K562 (cell line): ENCODE measurements at regions of chr1 and their contacts with region 1.

Region 1: DNA sequence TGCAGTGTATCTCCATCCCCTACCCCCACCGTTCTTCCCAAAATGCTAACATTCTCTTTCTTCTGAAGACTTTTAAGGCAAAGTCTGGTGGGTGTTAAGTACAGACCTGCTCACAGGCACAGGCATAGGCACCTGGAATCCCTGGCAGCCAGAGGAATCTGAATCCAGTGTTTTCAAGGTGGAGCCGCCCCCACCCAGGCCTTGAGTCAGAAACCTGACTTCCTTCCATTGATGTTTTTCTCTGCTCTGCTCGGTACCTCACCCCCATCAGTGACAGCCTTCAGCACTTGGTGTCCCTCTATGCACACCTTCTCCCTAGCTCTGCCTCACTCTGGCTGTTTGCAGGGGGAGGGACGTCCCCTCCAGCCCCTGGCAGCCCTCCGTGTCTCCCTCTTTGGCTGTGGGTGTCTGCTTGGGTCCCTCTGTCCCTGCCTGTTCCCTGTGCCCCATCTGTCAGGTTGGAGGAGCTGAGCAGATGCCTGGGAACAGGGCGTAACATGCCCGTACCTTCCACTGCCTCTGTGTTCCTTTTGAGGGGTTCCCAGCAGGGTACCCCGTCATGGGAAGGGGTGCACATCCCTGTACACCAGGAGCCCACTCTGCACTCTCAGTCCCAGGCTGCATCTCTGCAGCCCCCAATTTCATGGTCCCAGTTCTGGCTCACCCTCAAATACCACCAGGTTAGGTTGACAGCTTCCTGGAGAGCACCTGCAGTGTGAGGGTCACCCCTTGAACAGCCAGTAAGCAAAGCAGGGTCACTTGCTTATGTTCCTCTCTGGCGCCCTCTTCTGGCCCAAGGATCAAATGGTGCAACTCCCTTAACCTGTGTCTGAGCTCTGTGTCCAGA is 6.7 kb downstream of the NCDN start:
- DNase-seq: peak; percentile 85 to 92 (median 86)
- ATAC-seq: peak; percentile 88
- H3K4me3 ChIP-seq: no peak overlapping the region
- H3K27ac ChIP-seq: no peak overlapping the region
- H3K4me1 ChIP-seq: peaks cover 0 to 25% of the 10 kb centered on the region in 2 experiments; a peak in 2 of 5 replicates
- H3K27me3 ChIP-seq: no peaks in the 10 kb centered on the region
- CTCF ChIP-seq: peak; percentile 91 to 94 (median 93)
- EP300 ChIP-seq: no peak
- POLR2A ChIP-seq: no peak
- RAD21 ChIP-seq: peak; percentile 59 to 85

Region 2: DNA sequence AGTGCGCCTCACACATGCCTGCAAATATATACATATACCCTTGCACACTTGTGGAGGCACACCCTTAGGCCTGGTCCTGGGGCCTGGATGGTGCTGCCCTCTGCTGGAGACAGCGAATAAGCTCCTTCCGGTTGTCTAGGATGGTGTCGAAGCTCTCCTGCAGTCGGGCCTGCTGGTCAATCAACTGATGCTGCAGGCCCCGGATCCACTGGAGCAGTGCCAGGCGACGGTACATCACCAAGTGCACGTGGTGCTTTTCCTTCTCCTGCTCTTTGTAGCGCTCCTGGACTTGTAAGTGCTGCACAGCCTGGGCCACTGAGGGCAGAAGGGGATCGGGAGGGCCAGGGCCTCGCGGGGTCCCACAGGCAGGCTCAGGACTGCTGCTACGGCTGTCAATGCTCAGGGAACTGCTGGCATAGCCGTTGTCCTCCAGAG is 151.3 kb after region 1 on chr1:
- CTCF ChIA-PET with region 1: interaction called, 11 read pairs
- POLR2A ChIA-PET with region 1: interaction called, 16 read pairs
- in situ Hi-C with region 1: loop called (anchors 5 kb)
- intact Hi-C with region 1: loop called (anchors 1 kb)
- DNase-seq: peak; percentile 74 to 90 (median 82)
- ATAC-seq: peak; percentile 77
- H3K4me3 ChIP-seq: no peak overlapping the region
- H3K27ac ChIP-seq: no peak overlapping the region
- H3K4me1 ChIP-seq: peaks cover 19 to 23% of the 10 kb centered on the region in 2 experiments; a peak in 4 of 5 replicates
- H3K27me3 ChIP-seq: no peaks in the 10 kb centered on the region
- CTCF ChIP-seq: peak; percentile 92 to 98 (median 94)
- EP300 ChIP-seq: no peak
- POLR2A ChIP-seq: no peak
- RAD21 ChIP-seq: peak; percentile 79 to 90

Region 3: GRCh38 chr1:35726450-35727433 is 162.5 kb after region 1 on chr1:
- CTCF ChIA-PET with region 1: interaction called, 47 read pairs
- POLR2A ChIA-PET with region 1: interaction called, 6 read pairs
- in situ Hi-C with region 1: loop called (anchors 5 kb)
- intact Hi-C with region 1: loop called (anchors 1 kb)
- DNase-seq: peak; percentile 70 to 77 (median 74)
- ATAC-seq: peak; percentile 97
- H3K4me3 ChIP-seq: no peak overlapping the region
- H3K27ac ChIP-seq: no peak overlapping the region
- H3K4me1 ChIP-seq: no peaks in the 10 kb centered on the region
- H3K27me3 ChIP-seq: no peaks in the 10 kb centered on the region
- CTCF ChIP-seq: peak; percentile 86 to 95 (median 94)
- EP300 ChIP-seq: no peak
- POLR2A ChIP-seq: no peak
- RAD21 ChIP-seq: peak; percentile 83 to 91

Region 4: GRCh38 chr1:35769759-35770446 is 205.6 kb after region 1 on chr1 and contains the start of gene CLSPN:
- CTCF ChIA-PET with region 1: interaction called, 31 read pairs
- POLR2A ChIA-PET with region 1: interaction called, 5 read pairs
- in situ Hi-C with region 1: loop called (anchors 5 kb)
- intact Hi-C with region 1: loop called (anchors 1 kb)
- DNase-seq: peak; percentile 99 to 100 (median 99)
- ATAC-seq: peak; percentile 95
- H3K4me3 ChIP-seq: peak within 1 kb of the TSS; percentile 66
- H3K27ac ChIP-seq: peak within 1 kb of the TSS; percentile 89
- H3K4me1 ChIP-seq: peaks cover 2 to 28% of the 10 kb centered on the region in 2 experiments; a peak in 3 of 5 replicates
- H3K27me3 ChIP-seq: no peaks in the 10 kb centered on the region
- CTCF ChIP-seq: 0 out of 6 replicates have a peak, but pooled peaks of 1 of the 3 experiments have one; percentile 10
- EP300 ChIP-seq: no peak
- POLR2A ChIP-seq: peak; percentile 99
- RAD21 ChIP-seq: no peak
- polyA plus RNA-seq, gene CLSPN: 23.1 to 27.0 TPM